HepG2 (cell line): ENCODE measurements at regions of chr3 and their contacts with region 1.

Region 1: DNA sequence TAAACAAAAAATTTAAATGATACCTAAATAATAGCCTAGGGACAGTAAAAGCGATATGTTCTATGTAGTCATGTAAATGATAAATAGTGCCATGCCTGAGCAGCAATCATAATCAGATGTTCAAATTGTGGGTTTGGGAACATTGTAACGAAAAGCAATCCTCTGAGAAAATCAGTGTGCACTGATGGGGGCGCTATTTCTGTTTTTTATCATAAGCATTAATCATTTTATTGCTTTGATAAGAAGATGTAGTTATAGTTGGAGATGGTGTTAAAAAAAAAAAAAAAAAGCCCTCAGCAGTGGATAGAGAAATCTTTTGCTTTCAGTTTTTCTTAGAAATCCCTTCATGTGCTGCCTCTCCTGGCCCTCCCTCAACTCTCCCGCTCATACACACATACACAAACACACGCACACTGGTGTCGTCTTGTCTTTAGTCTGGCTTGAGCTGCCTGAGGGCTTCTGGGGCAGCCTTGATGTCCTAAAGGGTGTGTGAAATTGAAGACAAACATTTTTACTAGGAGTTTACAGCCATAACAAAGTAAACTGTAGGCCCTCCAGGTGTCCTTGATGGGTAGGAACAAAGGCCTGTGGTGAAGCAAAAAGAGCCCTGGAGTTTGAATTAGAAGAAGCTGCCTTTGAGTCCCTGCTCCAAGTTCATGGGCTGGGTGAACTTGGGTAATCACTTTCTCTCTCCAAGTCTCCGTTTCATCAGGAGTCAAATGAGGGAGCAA is 428.1 kb downstream of the SOX2 start:
- DNase-seq: no peak
- ATAC-seq: no peak
- H3K4me3 ChIP-seq: no peak overlapping the region
- H3K27ac ChIP-seq: no peak overlapping the region
- H3K4me1 ChIP-seq: peaks cover 18% of the 10 kb centered on the region
- H3K27me3 ChIP-seq: no peaks in the 10 kb centered on the region; a peak in 1 of 5 replicates
- CTCF ChIP-seq: no peak
- EP300 ChIP-seq: no peak
- POLR2A ChIP-seq: no peak
- RAD21 ChIP-seq: no peak

Region 2: GRCh38 chr3:182118081-182118480 is 21.7 kb before region 1 on chr3:
- CTCF ChIA-PET with region 1: no interaction called
- POLR2A ChIA-PET with region 1: no interaction called
- in situ Hi-C with region 1: no loop called
- intact Hi-C with region 1: loop called (anchors 2 kb)
- DNase-seq: no peak
- ATAC-seq: no peak
- H3K4me3 ChIP-seq: no peak overlapping the region
- H3K27ac ChIP-seq: no peak overlapping the region
- H3K4me1 ChIP-seq: no peaks in the 10 kb centered on the region
- H3K27me3 ChIP-seq: no peaks in the 10 kb centered on the region; a peak in 1 of 5 replicates
- CTCF ChIP-seq: no peak
- EP300 ChIP-seq: no peak
- POLR2A ChIP-seq: no peak
- RAD21 ChIP-seq: no peak

Region 3: GRCh38 chr3:182212479-182213076 is 72.8 kb after region 1 on chr3:
- CTCF ChIA-PET with region 1: no interaction called
- POLR2A ChIA-PET with region 1: no interaction called
- in situ Hi-C with region 1: no loop called
- intact Hi-C with region 1: loop called (anchors 1 kb)
- DNase-seq: peak; percentile 96
- ATAC-seq: peak; percentile 98
- H3K4me3 ChIP-seq: no peak overlapping the region
- H3K27ac ChIP-seq: peak overlapping the region; percentile 48
- H3K4me1 ChIP-seq: peaks cover 54% of the 10 kb centered on the region
- H3K27me3 ChIP-seq: no peaks in the 10 kb centered on the region
- CTCF ChIP-seq: no peak
- EP300 ChIP-seq: peak in 1 of 2 experiments; percentile 82; a peak in 1 of 4 replicates
- POLR2A ChIP-seq: no peak
- RAD21 ChIP-seq: no peak

Region 4: DNA sequence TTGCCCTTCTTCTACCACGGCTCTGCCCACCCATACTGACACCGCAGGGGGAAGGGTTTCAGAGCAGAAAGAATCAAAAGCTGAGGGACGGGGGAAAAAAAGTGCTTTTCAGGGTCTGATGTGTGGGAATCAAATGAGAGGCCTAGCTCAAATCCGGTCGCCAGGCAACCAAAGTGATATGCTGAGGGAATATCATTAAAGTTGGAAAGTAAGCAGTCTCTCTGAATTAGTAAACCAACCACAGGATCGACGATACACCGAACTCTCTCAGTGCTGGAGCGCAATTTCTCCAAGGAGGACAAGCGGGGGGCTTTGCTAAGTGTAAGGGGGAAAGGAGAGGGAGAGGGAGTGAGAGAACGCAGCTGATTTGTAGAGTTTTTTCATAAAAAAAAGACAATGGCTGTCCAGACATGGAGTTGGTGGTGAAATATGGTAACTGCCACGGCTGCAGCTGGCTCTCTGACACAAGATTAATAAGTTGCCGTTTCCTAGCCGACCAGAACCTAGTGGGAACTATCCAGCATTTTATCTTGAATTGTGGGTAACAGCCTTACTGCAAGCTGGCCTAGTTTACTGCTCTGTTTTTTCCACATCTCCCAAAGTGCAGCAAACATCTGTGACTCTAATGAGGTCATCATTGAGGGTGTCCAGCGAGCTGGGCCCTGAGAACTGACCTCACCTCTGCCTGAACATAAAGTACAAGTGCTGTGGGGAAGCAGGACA is 102.1 kb after region 1 on chr3:
- CTCF ChIA-PET with region 1: no interaction called
- POLR2A ChIA-PET with region 1: no interaction called
- in situ Hi-C with region 1: no loop called
- intact Hi-C with region 1: loop called (anchors 5 kb)
- DNase-seq: peak; percentile 9
- ATAC-seq: no peak
- H3K4me3 ChIP-seq: no peak overlapping the region
- H3K27ac ChIP-seq: no peak overlapping the region
- H3K4me1 ChIP-seq: peaks cover 43% of the 10 kb centered on the region
- H3K27me3 ChIP-seq: no peaks in the 10 kb centered on the region
- CTCF ChIP-seq: no peak
- EP300 ChIP-seq: no peak
- POLR2A ChIP-seq: no peak
- RAD21 ChIP-seq: no peak

Region 5: DNA sequence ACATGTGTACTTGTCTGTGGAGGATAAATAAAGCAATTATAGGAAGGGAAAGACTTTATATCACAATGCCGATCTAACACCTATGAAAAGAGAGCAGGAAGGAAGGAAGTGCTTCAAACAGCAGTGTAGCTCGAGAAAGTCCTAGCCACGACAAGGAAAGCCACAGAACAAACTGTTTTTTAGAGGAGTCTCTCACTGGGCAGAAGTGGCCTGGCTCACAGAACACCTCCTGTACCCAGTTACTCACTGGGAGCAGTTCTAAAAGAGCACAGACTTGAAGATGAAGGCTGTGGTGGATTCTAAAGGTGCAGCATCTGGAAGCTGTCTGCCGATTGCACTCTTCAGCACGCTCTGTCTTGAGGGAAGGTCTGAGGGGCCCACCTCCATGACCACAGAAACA is 404.8 kb after region 1 on chr3:
- CTCF ChIA-PET with region 1: no interaction called
- POLR2A ChIA-PET with region 1: no interaction called
- in situ Hi-C with region 1: no loop called
- intact Hi-C with region 1: no loop called
- DNase-seq: no peak
- ATAC-seq: no peak
- H3K4me3 ChIP-seq: no peak overlapping the region
- H3K27ac ChIP-seq: no peak overlapping the region
- H3K4me1 ChIP-seq: no peaks in the 10 kb centered on the region
- H3K27me3 ChIP-seq: no peaks in the 10 kb centered on the region; a peak in 1 of 5 replicates
- CTCF ChIP-seq: no peak
- EP300 ChIP-seq: no peak
- POLR2A ChIP-seq: no peak
- RAD21 ChIP-seq: no peak